Calu3 (cell line): ENCODE measurements at regions of chr20 and their contacts with region 1.

Region 1: DNA sequence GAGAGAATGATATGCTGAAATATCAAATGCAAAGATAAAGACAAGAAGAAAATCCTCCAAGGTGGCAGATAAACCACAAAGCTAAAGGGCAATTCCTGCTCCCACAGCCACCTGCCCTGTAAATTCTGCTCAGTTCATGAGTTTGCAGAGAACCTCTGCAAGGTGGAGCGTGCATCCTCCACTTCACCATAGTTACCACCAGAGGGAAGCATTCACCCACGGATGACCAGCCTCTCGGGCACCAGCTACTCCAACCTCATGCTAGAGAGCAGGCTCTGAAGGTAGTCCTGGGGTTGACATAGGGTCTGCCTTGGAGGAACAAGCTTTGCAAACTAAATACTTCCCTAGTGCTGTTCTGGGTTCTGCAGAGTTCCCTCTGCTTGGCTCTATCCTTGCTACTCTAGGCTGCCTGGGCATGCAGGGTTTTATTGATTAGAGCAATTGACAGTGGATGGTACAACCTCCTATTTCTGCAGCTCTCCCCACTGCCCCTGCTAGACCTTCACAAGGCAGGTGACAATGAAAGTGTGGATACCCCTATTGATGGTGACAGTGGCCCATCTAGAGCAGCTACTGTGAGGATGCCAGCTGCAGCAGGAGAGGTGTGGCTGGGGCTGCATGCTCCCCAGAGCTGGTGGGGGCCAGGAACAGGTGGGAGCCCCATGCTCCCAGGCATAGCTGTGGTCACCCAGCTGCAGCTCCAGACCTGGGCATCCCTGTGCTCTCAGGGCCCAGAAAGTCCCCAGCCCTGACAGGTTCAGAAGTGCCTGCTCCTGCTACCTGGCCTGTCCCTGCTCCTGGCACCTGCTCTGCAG is 51.1 kb downstream of the GGTLC1 start:
- DNase-seq: peak; percentile 21
- H3K4me3 Mint-ChIP-seq: no peak overlapping the region
- H3K27ac Mint-ChIP-seq: no peak overlapping the region
- H3K4me1 Mint-ChIP-seq: no peaks in the 10 kb centered on the region
- H3K27me3 Mint-ChIP-seq: no peaks in the 10 kb centered on the region
- CTCF ChIP-seq: peak; percentile 20

Region 2: GRCh38 chr20:23954008-23954745 is 16.7 kb after region 1 on chr20:
- CTCF ChIA-PET with region 1: no interaction called
- intact Hi-C with region 1: no loop called
- DNase-seq: no peak
- H3K4me3 Mint-ChIP-seq: no peak overlapping the region
- H3K27ac Mint-ChIP-seq: no peak overlapping the region
- H3K4me1 Mint-ChIP-seq: no peaks in the 10 kb centered on the region
- H3K27me3 Mint-ChIP-seq: no peaks in the 10 kb centered on the region
- CTCF ChIP-seq: no peak

Region 3: GRCh38 chr20:23995905-23996666 is 58.6 kb after region 1 on chr20:
- CTCF ChIA-PET with region 1: no interaction called
- intact Hi-C with region 1: loop called (anchors 10 kb)
- DNase-seq: peak; percentile 28
- H3K4me3 Mint-ChIP-seq: no peak overlapping the region
- H3K27ac Mint-ChIP-seq: no peak overlapping the region
- H3K4me1 Mint-ChIP-seq: no peaks in the 10 kb centered on the region
- H3K27me3 Mint-ChIP-seq: peaks cover 13% of the 10 kb centered on the region
- CTCF ChIP-seq: no peak

Region 4: DNA sequence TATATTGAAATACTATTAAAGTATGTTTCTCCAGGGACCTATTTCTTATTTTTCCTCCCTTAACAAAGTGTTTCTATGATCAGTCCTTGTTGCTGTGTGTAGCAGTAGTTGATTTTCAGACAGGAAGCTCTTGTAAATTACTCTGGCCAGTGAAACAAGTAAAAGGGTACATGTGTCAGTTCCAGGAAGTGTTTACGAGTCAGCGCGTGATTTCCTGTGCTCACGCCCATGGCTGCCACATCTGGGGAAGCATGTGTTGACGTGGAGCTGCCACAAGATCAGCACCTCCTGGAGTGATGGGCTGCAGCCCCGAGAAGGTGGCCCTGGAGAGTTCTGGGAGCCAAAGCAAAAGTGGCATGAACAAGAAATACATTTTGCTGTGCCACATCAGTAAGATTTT is 89.7 kb after region 1 on chr20:
- CTCF ChIA-PET with region 1: no interaction called
- intact Hi-C with region 1: no loop called
- DNase-seq: no peak
- H3K4me3 Mint-ChIP-seq: no peak overlapping the region
- H3K27ac Mint-ChIP-seq: no peak overlapping the region
- H3K4me1 Mint-ChIP-seq: no peaks in the 10 kb centered on the region
- H3K27me3 Mint-ChIP-seq: no peaks in the 10 kb centered on the region
- CTCF ChIP-seq: no peak